Heart right ventricle (tissue), 16 donors: ENCODE measurements at regions of chr1 and their contacts with region 1.

Region 1: DNA sequence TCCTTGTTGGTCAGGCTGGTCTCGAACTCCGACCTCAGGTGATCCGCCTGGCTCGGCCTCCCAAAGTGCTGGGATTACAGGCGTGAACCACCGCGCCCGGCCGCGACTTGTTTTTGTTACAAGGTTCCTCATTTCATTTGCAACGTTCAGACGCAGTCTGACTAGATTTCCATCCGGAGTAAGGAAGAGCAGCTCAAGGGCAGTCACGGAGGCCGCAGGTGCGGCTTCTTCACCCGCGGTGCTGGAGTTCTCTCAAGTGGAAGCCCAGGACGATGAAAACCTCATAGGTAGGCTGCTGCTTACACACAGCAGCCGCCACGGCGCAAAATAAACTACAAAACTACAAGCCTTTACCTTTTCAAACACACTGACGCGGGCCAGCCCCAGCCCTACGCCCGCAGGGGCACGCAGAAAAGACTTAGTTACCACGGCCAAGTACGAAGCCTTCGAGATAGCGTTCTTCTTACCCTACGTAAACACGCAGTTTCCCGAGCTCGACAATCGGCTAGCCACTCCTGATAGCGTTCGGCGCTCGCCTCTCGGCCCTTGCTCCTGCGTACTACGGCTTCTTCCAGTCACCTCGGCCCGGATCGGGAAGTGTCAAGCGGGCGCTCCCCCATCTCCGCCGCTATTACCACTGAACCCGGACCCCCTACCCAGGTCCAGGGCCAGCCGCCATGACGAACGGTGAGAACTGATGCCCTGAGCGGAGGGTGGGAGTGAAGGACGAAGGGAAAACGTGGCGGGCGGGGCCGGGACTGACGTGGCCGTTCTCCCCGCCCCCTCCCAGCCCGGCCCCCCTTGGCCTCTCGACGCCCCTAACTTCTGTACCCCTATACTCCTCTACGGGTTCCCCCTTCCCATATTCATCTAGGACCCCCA is at the start of gene TMEM167B:
- DNase-seq: peak; percentile 88 to 95
- ATAC-seq: peak; percentile 95 to 98 (median 96)
- H3K4me3 ChIP-seq: peak within 1 kb of the TSS; percentile 64 to 89 (median 80)
- H3K27ac ChIP-seq: peak within 1 kb of the TSS; percentile 94 to 100 (median 98)
- H3K4me1 ChIP-seq: peaks cover 6 to 58% (median 36%) of the 10 kb centered on the region in 9 donors
- H3K27me3 ChIP-seq: no peaks in the 10 kb centered on the region
- CTCF ChIP-seq: no peak
- total RNA-seq, gene TMEM167B: 27.5 to 52.9 (median 41.2) TPM

Region 2: GRCh38 chr1:109041621-109042468 is 48.6 kb before region 1 on chr1 and contains the start of gene WDR47:
- intact Hi-C with region 1: loop called in 3 of 10 experiments (anchors 5 to 10 kb)
- DNase-seq: peak; percentile 94 to 95
- ATAC-seq: peak; percentile 97 to 99 (median 98)
- H3K4me3 ChIP-seq: peak within 1 kb of the TSS; percentile 89 to 100 (median 96)
- H3K27ac ChIP-seq: peak within 1 kb of the TSS; percentile 54 to 93 (median 89)
- H3K4me1 ChIP-seq: peaks cover 0 to 20% (median 13%) of the 10 kb centered on the region in 9 donors
- H3K27me3 ChIP-seq: no peaks in the 10 kb centered on the region
- CTCF ChIP-seq: no peak
- total RNA-seq, gene WDR47: 10.7 to 20.6 (median 14.4) TPM

Region 3: GRCh38 chr1:109075531-109076490 is 14.6 kb before region 1 on chr1 and contains the start of gene TAF13:
- intact Hi-C with region 1: loop called in 1 of 10 experiments (anchors 2 kb)
- DNase-seq: peak; percentile 95
- ATAC-seq: peak; percentile 97 to 100 (median 99)
- H3K4me3 ChIP-seq: peak within 1 kb of the TSS; percentile 55 to 90 (median 76)
- H3K27ac ChIP-seq: peak within 1 kb of the TSS; percentile 58 to 98 (median 94)
- H3K4me1 ChIP-seq: peaks cover 7 to 31% (median 24%) of the 10 kb centered on the region in 9 donors
- H3K27me3 ChIP-seq: no peaks in the 10 kb centered on the region
- CTCF ChIP-seq: peak in 6 of 9 donors; percentile 12 to 46 (median 32)
- total RNA-seq, gene TAF13: 45.8 to 69.9 (median 59.0) TPM

Region 4: DNA sequence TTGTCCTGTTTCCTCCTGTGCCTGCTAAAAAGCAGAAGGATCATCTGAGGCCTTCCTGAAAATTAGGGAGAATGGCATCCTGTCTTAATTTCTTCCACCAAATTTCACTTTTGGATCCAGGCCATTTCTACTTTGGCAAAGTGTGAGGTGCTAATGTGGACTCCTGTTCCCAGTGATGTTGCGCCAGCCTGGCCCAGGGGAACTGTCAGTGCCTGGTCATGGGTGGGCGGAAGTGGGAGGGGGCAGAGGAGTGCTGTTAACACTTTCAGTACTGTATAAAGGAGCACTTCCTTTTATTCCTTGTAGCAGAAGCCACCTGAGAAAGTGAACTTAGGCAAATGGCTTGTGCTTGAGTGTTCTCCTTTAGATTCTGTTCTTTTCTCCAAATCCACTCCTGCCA is 43.4 kb after region 1 on chr1:
- intact Hi-C with region 1: no loop called
- DNase-seq: peak in 1 of 2 donors; percentile 60
- ATAC-seq: peak; percentile 74 to 97 (median 84)
- H3K4me3 ChIP-seq: no peak overlapping the region
- H3K27ac ChIP-seq: peak overlapping the region in 2 of 10 donors; percentile 13 to 40
- H3K4me1 ChIP-seq: peaks cover 0 to 18% (median 13%) of the 10 kb centered on the region in 9 donors
- H3K27me3 ChIP-seq: no peaks in the 10 kb centered on the region
- CTCF ChIP-seq: no peak